ENCODE measurements at regions of chr20 and their contacts with region 1.

Region 1: DNA sequence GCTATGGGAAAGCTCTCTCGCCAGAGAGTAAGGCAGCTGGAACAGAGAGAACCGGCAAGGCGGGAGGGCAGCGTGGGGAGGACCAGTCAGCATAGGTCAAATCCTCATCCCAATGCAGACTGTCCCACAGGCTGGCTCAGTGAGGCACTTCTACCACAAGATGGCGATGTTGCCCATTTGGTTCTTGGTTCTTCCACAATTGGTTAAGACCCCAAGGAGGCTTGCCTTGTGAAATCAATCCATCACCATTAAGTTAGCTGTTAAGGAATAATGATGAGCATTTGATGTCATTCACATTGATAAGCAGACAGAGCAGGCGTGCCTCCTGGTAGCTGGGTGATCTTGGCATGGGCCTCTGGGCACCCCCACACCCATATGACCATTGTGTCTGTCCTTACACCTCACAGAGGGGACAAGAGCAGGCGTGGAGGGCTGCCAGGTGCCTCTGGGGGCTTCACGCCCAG is 2.4 kb downstream of the CSTL1 start:
- DNase-seq: peak; percentile 85
- H3K4me3 Mint-ChIP-seq: no peak overlapping the region
- H3K27ac Mint-ChIP-seq: no peak overlapping the region
- H3K4me1 Mint-ChIP-seq: peaks cover 25% of the 10 kb centered on the region
- H3K27me3 Mint-ChIP-seq: no peaks in the 10 kb centered on the region
- CTCF ChIP-seq: peak; percentile 86

Region 2: GRCh38 chr20:23061734-23062561 is 379.9 kb before region 1 on chr20:
- CTCF ChIA-PET with region 1: no interaction called
- POLR2A ChIA-PET with region 1: no interaction called
- intact Hi-C with region 1: no loop called
- DNase-seq: peak; percentile 50
- H3K4me3 Mint-ChIP-seq: no peak overlapping the region
- H3K27ac Mint-ChIP-seq: no peak overlapping the region
- H3K4me1 Mint-ChIP-seq: no peaks in the 10 kb centered on the region
- H3K27me3 Mint-ChIP-seq: no peaks in the 10 kb centered on the region
- CTCF ChIP-seq: no peak

Region 3: DNA sequence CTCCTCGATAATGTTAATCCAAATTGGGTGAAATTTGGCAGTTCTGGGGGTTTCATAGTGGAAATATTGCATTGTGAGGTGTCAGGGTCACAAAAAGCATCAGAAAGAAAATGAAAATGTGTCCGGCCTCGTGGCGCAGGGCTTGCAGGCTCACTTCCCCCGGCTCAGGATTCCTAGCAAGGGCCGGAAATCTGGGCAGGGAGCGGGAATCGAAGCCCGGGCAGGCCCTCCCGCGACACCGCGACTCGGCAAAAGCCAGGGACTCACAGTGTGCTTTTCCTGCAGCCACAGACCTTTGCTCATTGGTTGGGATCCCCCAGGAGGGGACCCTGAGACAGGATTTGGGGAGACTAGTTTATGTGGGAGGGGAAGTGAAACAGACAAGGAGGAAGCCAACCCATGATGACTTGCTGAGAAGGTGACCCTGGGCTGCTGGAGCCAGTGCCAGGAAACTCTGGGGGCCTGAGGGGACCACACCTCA is 354.9 kb before region 1 on chr20:
- CTCF ChIA-PET with region 1: no interaction called
- POLR2A ChIA-PET with region 1: no interaction called
- intact Hi-C with region 1: no loop called
- DNase-seq: no peak
- H3K4me3 Mint-ChIP-seq: no peak overlapping the region
- H3K27ac Mint-ChIP-seq: no peak overlapping the region
- H3K4me1 Mint-ChIP-seq: peaks cover 5% of the 10 kb centered on the region
- H3K27me3 Mint-ChIP-seq: no peaks in the 10 kb centered on the region
- CTCF ChIP-seq: no peak

Region 4: GRCh38 chr20:23214903-23215302 is 227.0 kb before region 1 on chr20:
- CTCF ChIA-PET with region 1: no interaction called
- POLR2A ChIA-PET with region 1: no interaction called
- intact Hi-C with region 1: no loop called
- DNase-seq: no peak
- H3K4me3 Mint-ChIP-seq: no peak overlapping the region
- H3K27ac Mint-ChIP-seq: no peak overlapping the region
- H3K4me1 Mint-ChIP-seq: no peaks in the 10 kb centered on the region
- H3K27me3 Mint-ChIP-seq: no peaks in the 10 kb centered on the region
- CTCF ChIP-seq: no peak

Region 5: DNA sequence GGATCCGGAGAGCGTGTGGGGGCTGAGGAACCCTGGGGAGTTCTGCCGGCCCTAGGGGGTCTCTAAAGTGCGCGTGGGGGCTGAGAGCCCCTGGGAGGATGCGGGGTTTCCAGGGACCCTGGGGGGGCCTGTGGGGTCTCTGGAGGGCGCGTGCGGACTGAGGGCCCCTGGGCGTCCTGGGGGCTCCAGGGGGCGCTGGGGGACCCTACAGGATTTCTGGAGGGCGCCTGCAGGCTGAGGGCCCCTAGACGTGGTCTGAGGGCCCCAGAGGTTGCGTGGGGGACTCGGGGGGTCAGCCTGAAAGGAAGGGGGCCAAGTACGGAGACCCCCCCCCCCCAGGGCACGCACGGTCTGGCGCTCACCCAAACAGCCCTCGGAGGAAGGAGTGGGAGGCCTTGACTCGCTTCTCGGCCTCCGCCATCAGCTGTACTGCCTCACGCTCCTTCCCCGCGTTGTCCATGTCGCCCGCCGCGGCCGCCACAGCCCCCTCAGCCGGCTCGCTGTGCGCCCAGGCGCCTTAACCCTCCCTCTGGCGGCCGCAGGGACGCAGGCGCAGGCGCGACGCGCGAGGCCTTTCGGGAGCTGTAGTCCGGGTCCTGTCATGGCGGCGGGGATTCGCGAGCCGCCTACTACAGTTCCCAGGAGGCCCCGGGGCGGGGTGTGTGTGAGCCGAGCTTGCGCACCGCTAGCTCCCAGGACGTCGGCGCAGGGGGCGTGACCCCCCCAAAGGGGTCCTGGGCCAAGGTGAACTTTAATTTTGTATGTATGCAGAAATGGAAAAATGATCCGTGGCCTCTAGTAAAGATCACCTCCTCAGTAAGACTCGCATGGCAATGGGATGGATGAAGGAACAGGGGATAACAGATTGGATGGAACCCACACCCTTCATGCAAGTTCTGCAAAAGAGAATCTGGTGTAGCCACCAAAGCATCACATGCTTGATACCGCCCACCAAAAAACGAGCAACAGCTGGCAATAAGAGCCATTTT is 20.6 kb before region 1 on chr20 and contains the start of gene NAPB:
- CTCF ChIA-PET with region 1: interaction called, 60 read pairs
- POLR2A ChIA-PET with region 1: interaction called, 11 read pairs
- intact Hi-C with region 1: no loop called
- DNase-seq: peak; percentile 92
- H3K4me3 Mint-ChIP-seq: peak within 1 kb of the TSS; percentile 78
- H3K27ac Mint-ChIP-seq: peak within 1 kb of the TSS; percentile 90
- H3K4me1 Mint-ChIP-seq: peaks cover 9% of the 10 kb centered on the region
- H3K27me3 Mint-ChIP-seq: no peaks in the 10 kb centered on the region
- CTCF ChIP-seq: peak; percentile 39
- total RNA-seq, gene NAPB: 9.6 and 10.9 TPM in 2 replicates

Region 6: DNA sequence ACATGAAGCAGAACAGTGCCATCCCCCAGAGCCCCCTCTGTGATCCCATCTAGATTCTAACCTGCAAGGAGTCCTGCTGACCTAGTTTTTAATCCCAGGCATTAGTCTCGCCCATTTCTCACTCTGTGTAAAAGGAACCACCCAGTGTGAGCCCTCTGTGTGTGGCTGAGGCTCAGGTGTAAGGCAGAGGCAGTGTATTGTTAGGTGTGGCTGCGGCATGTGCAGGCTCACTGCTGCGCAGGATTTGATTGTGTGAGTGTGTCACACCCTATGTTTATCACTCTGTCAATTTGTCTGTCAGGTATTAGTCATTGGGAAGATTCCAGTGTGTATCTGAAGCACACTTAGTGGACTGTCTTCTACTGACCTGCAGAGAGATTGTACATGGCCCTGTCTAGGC is 35.3 kb after region 1 on chr20:
- CTCF ChIA-PET with region 1: interaction called, 10 read pairs
- POLR2A ChIA-PET with region 1: no interaction called
- intact Hi-C with region 1: no loop called
- DNase-seq: no peak
- H3K4me3 Mint-ChIP-seq: no peak overlapping the region
- H3K27ac Mint-ChIP-seq: no peak overlapping the region
- H3K4me1 Mint-ChIP-seq: no peaks in the 10 kb centered on the region
- H3K27me3 Mint-ChIP-seq: no peaks in the 10 kb centered on the region
- CTCF ChIP-seq: no peak

Region 7: DNA sequence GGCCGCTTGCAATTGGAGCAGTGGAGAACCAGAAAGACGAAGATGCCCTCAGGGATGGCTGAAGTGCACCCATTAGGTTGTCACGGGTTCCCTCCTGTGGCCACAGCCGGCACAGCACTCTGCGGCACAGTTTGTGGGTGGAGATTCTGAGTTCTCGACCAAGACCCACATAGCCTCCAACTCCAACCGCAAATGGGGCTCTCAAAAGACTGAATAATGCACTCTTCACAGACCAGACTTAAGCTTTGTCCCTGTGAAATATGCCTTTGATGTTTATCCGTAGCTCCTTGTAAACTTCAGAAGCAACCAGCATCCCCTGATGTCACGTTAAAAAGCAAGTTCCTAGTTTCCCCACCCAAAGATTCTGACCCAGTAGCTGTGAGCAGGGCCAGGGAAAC is 164.8 kb after region 1 on chr20:
- CTCF ChIA-PET with region 1: interaction called, 541 read pairs
- POLR2A ChIA-PET with region 1: interaction called, 5 read pairs
- intact Hi-C with region 1: loop called (anchors 1 kb)
- DNase-seq: peak; percentile 86
- H3K4me3 Mint-ChIP-seq: no peak overlapping the region
- H3K27ac Mint-ChIP-seq: peak overlapping the region; percentile 58
- H3K4me1 Mint-ChIP-seq: no peaks in the 10 kb centered on the region
- H3K27me3 Mint-ChIP-seq: no peaks in the 10 kb centered on the region
- CTCF ChIP-seq: peak; percentile 90

Region 8: GRCh38 chr20:23663180-23663579 is 221.3 kb after region 1 on chr20:
- CTCF ChIA-PET with region 1: interaction called, 27 read pairs
- POLR2A ChIA-PET with region 1: no interaction called
- intact Hi-C with region 1: loop called (anchors 1 kb)
- DNase-seq: no peak
- H3K4me3 Mint-ChIP-seq: no peak overlapping the region
- H3K27ac Mint-ChIP-seq: no peak overlapping the region
- H3K4me1 Mint-ChIP-seq: no peaks in the 10 kb centered on the region
- H3K27me3 Mint-ChIP-seq: no peaks in the 10 kb centered on the region
- CTCF ChIP-seq: no peak